ENCODE measurements at regions of chr10 and their contacts with region 1.

Region 1: GRCh38 chr10:11036407-11037011 is 18.8 kb downstream of the CELF2 start:
- DNase-seq: no peak
- H3K4me3 ChIP-seq: no peak overlapping the region
- H3K27ac ChIP-seq: no peak overlapping the region
- H3K4me1 ChIP-seq: peaks cover 0 to 18% (median 16%) of the 10 kb centered on the region in 4 donors
- H3K27me3 ChIP-seq: no peaks in the 10 kb centered on the region
- CTCF ChIP-seq: peak; percentile 42 to 63 (median 56)
- EP300 ChIP-seq: no peak
- POLR2A ChIP-seq: no peak

Region 2: GRCh38 chr10:9331583-9332008 is 1704.9 kb before region 1 on chr10:
- intact Hi-C with region 1: loop called (anchors 5 kb)
- DNase-seq: no peak
- H3K4me3 ChIP-seq: no peak overlapping the region
- H3K27ac ChIP-seq: no peak overlapping the region
- H3K4me1 ChIP-seq: peaks cover 0 to 5% (median 0%) of the 10 kb centered on the region in 4 donors
- H3K27me3 ChIP-seq: no peaks in the 10 kb centered on the region
- CTCF ChIP-seq: peak; percentile 28 to 90 (median 62)
- EP300 ChIP-seq: no peak
- POLR2A ChIP-seq: no peak

Region 3: GRCh38 chr10:10745291-10745690 is 291.2 kb before region 1 on chr10:
- intact Hi-C with region 1: no loop called
- DNase-seq: no peak
- H3K4me3 ChIP-seq: no peak overlapping the region
- H3K27ac ChIP-seq: no peak overlapping the region
- H3K4me1 ChIP-seq: no peaks in the 10 kb centered on the region
- H3K27me3 ChIP-seq: no peaks in the 10 kb centered on the region
- CTCF ChIP-seq: no peak
- EP300 ChIP-seq: no peak
- POLR2A ChIP-seq: no peak

Region 4: DNA sequence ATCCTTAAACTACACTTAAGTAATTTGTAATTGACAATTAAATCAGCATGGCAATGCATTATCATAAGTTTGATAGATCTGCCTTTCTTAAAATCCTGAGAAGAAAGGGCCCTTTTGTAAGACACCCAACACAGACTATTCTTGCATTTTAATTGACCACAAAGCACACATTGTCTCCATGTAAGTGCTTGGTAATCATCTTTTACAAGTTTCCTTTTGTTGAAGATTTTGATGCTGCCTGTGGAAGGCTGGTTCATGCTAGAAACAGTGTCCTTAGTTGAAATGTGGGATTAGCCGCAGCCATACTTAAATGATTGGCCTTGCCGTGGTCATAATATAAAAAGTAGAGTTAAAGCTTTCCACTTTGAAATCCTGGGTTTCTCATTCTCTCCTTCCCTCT is 51.1 kb before region 1 on chr10:
- intact Hi-C with region 1: no loop called
- DNase-seq: no peak
- H3K4me3 ChIP-seq: no peak overlapping the region
- H3K27ac ChIP-seq: peak overlapping the region in 1 of 4 donors; percentile 21
- H3K4me1 ChIP-seq: peaks cover 0 to 8% (median 0%) of the 10 kb centered on the region in 4 donors
- H3K27me3 ChIP-seq: no peaks in the 10 kb centered on the region
- CTCF ChIP-seq: no peak
- EP300 ChIP-seq: no peak
- POLR2A ChIP-seq: no peak

Measured in sigmoid colon (tissue), 7 donors.